Mammary epithelial cell (primary cell): ENCODE measurements at regions of chr22 and their contacts with region 1.

Region 1: GRCh38 chr22:39003165-39003638 is 10.9 kb upstream of the APOBEC3C start:
- DNase-seq: peak; percentile 87
- H3K4me3 ChIP-seq: no peak overlapping the region
- H3K27ac ChIP-seq: no peak overlapping the region
- H3K4me1 ChIP-seq: peaks cover 5% of the 10 kb centered on the region
- H3K27me3 ChIP-seq: no peaks in the 10 kb centered on the region
- CTCF ChIP-seq: peak; percentile 74 to 77

Region 2: DNA sequence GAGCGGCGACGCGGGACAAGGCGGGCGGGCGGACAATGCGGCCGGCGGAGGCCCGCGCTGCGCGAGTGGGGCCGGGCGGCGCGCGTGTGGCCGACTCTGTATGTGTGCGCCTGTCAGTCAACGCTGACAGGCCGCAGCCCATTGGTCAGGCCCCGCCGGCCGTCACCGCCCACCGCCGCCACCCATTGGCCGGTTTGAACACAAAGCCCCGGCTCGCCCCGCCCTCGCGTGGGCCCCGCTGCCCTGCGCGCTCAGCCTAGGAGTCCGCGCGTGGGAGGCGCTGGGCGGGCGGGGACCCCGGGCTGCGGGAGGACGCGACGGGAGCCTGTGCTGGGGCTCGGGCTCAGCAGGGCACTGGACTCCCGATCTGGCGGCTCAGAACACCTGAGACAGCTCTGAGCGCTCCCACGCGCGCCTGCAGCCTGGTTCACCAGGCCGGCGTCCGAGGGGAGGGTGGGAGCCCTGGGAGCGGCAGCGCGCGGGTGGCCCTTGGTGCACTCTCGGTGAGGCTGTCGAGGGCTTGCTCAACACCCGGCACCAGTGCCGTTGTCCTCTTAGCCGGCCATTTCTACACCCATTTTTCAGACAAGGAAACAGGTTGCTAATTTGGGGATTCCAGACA is 247.2 kb before region 1 on chr22 and contains the start of gene SUN2:
- CTCF ChIA-PET with region 1: no interaction called
- dilution Hi-C with region 1: no loop called
- in situ Hi-C with region 1: loop called (anchors 10 to 25 kb)
- intact Hi-C with region 1: no loop called
- DNase-seq: peak; percentile 74
- H3K4me3 ChIP-seq: peak within 1 kb of the TSS; percentile 45 to 70 (median 55)
- H3K27ac ChIP-seq: peak within 1 kb of the TSS; percentile 37
- H3K4me1 ChIP-seq: peaks cover 35% of the 10 kb centered on the region
- H3K27me3 ChIP-seq: no peaks in the 10 kb centered on the region
- CTCF ChIP-seq: no peak
- total RNA-seq, gene SUN2: 70.3 to 106 TPM

Region 3: GRCh38 chr22:38872172-38872830 is 130.9 kb before region 1 on chr22 and contains the start of gene CBX6:
- CTCF ChIA-PET with region 1: interaction called, 8 read pairs
- dilution Hi-C with region 1: no loop called
- in situ Hi-C with region 1: loop called (anchors 5 to 10 kb)
- intact Hi-C with region 1: loop called (anchors 1 kb)
- DNase-seq: peak; percentile 81
- H3K4me3 ChIP-seq: peak within 1 kb of the TSS; percentile 68 to 83 (median 76)
- H3K27ac ChIP-seq: peak within 1 kb of the TSS; percentile 36
- H3K4me1 ChIP-seq: peaks cover 27% of the 10 kb centered on the region
- H3K27me3 ChIP-seq: no peaks in the 10 kb centered on the region
- CTCF ChIP-seq: no peak
- total RNA-seq, gene CBX6: 32.3 to 55.7 TPM

Region 4: DNA sequence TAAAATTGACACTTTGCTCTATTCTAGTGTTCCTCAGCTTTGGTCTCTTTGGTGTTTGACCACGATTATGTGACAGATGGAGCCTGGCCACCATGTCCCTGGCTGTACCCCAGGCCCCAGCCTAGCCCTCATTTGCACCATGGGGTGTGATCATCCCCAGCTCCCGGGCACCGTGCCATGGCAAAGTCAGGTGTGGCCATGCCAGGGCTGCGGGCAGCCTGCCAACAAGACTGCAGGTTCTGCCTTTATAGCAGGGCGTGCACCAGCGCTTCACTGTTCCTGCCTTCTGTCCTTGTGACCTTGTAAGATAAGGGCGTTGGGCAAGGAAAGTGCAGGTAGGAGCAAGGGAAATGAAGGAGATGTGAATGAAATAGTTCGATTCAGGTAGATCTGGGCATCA is 68.2 kb before region 1 on chr22:
- CTCF ChIA-PET with region 1: no interaction called
- dilution Hi-C with region 1: loop called (anchors 5 kb)
- in situ Hi-C with region 1: no loop called
- intact Hi-C with region 1: loop called (anchors 5 kb)
- DNase-seq: peak; percentile 54
- H3K4me3 ChIP-seq: no peak overlapping the region
- H3K27ac ChIP-seq: no peak overlapping the region
- H3K4me1 ChIP-seq: peaks cover 6% of the 10 kb centered on the region
- H3K27me3 ChIP-seq: no peaks in the 10 kb centered on the region
- CTCF ChIP-seq: no peak

Region 5: DNA sequence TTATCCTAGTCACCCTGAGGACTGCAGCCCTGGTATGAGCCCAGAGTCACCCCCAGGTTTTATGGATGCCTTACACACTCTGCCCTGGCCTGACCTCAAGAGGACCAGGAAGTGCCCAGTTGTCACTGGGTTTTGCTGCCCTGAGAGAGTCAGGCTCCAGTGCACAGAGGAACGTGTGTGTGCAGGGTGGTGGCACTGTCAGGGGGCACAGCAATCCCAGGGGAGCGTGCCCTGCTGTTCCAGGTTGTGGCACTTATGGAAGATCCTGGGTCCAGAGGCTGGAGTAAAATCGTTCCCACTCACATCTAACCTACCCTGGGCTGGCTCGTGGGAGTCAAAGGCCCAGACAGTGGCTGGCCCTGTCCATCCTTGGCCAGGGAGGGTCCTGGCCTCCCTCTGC is 38.2 kb before region 1 on chr22:
- CTCF ChIA-PET with region 1: no interaction called
- dilution Hi-C with region 1: no loop called
- in situ Hi-C with region 1: no loop called
- intact Hi-C with region 1: no loop called
- DNase-seq: no peak
- H3K4me3 ChIP-seq: no peak overlapping the region
- H3K27ac ChIP-seq: no peak overlapping the region
- H3K4me1 ChIP-seq: no peaks in the 10 kb centered on the region
- H3K27me3 ChIP-seq: no peaks in the 10 kb centered on the region
- CTCF ChIP-seq: no peak

Region 6: GRCh38 chr22:38981992-38982927 is 20.9 kb before region 1 on chr22 and contains the start of gene APOBEC3B:
- CTCF ChIA-PET with region 1: interaction called, 5 read pairs
- dilution Hi-C with region 1: no loop called
- in situ Hi-C with region 1: no loop called
- intact Hi-C with region 1: loop called (anchors 2 kb)
- DNase-seq: peak; percentile 93
- H3K4me3 ChIP-seq: peak within 1 kb of the TSS; percentile 11 to 41 (median 32)
- H3K27ac ChIP-seq: peak within 1 kb of the TSS; percentile 82
- H3K4me1 ChIP-seq: peaks cover 39% of the 10 kb centered on the region
- H3K27me3 ChIP-seq: no peaks in the 10 kb centered on the region
- CTCF ChIP-seq: no peak
- total RNA-seq, gene APOBEC3B: 0.83 to 21.2 TPM

Region 7: DNA sequence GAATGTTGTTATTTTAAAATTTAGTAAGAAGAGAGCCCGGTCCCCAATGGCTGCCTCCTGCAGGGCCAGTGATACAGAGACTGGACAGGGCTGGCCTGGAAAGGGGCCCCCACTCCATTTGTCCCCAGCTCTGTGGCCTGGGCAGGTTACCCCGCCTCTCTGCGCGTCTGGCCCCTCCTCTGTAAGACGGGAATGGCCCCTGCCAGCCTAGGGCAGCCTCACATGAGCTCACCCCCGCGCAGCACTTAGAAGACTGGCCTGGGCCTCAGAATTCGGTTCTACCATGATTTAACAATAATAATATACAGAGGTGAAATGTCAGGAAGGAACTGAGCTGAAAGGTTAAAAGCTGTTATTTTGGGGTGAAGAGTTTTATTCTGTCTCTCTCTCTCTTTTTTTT is 75.1 kb after region 1 on chr22:
- CTCF ChIA-PET with region 1: no interaction called
- dilution Hi-C with region 1: no loop called
- in situ Hi-C with region 1: no loop called
- intact Hi-C with region 1: no loop called
- DNase-seq: no peak
- H3K4me3 ChIP-seq: peak overlapping the region in 1 of 3 experiments; percentile 70
- H3K27ac ChIP-seq: no peak overlapping the region
- H3K4me1 ChIP-seq: peaks cover 10% of the 10 kb centered on the region
- H3K27me3 ChIP-seq: no peaks in the 10 kb centered on the region
- CTCF ChIP-seq: no peak

Region 8: DNA sequence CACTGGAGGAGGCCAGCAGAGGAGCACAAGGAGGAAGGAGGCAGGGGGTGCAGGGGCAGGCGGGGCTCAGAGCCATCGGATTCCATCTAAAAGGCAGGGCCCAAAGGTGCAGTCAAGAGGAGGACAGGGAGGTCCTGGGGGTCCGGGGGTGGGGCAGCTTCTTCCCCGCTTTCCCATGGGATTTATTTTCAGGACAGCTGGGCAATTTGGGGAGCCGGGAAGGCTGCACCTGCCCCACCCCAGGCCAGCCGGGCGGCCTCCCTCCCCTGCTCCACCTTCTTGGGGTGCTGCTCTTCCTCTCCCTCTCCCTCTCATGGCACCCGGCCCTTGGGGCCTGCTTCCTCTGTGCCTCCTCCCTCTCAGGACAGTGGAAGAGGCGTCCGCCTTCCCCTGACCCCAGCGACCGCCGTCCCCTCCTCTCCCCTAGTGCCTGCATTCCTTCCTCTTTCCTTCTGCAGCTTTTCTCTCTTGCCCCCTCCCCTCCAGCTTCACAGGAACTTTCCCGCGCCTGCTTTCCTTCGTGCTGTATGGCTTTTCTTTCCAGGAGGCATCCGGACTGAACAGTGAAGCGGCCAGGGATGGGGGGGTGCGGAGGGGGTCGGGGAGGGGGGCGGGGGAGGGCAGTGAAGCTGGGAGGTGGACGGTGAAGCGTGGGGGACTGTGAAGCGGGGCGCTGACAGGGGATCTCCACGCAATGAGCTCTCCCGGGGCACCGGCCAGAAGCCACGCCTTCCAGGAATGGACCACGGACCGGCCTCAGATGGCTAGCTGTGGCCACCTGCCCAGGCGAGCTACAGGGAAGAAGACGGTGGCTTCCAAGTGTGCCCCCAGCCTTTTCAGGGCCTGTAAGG is 120.8 kb after region 1 on chr22:
- CTCF ChIA-PET with region 1: interaction called, 5 read pairs
- dilution Hi-C with region 1: loop called (anchors 5 kb)
- in situ Hi-C with region 1: loop called in 1 of 2 experiments (anchors 5 kb)
- intact Hi-C with region 1: loop called (anchors 1 kb)
- DNase-seq: no peak
- H3K4me3 ChIP-seq: no peak overlapping the region
- H3K27ac ChIP-seq: no peak overlapping the region
- H3K4me1 ChIP-seq: no peaks in the 10 kb centered on the region
- H3K27me3 ChIP-seq: no peaks in the 10 kb centered on the region
- CTCF ChIP-seq: no peak

Region 9: GRCh38 chr22:39319270-39320022 is 316.2 kb after region 1 on chr22 and contains the start of gene RPL3:
- CTCF ChIA-PET with region 1: no interaction called
- dilution Hi-C with region 1: no loop called
- in situ Hi-C with region 1: loop called in 1 of 2 experiments (anchors 25 kb)
- intact Hi-C with region 1: no loop called
- DNase-seq: peak; percentile 96
- H3K4me3 ChIP-seq: peak within 1 kb of the TSS; percentile 74 to 97 (median 87)
- H3K27ac ChIP-seq: peak within 1 kb of the TSS; percentile 92
- H3K4me1 ChIP-seq: peaks cover 20% of the 10 kb centered on the region
- H3K27me3 ChIP-seq: no peaks in the 10 kb centered on the region
- CTCF ChIP-seq: no peak
- total RNA-seq, gene RPL3: 1,970 to 2,165 TPM

Region 10: GRCh38 chr22:39405346-39406085 is 402.3 kb after region 1 on chr22:
- CTCF ChIA-PET with region 1: no interaction called
- dilution Hi-C with region 1: no loop called
- in situ Hi-C with region 1: no loop called
- intact Hi-C with region 1: no loop called
- DNase-seq: no peak
- H3K4me3 ChIP-seq: no peak overlapping the region
- H3K27ac ChIP-seq: no peak overlapping the region
- H3K4me1 ChIP-seq: peaks cover 5% of the 10 kb centered on the region
- H3K27me3 ChIP-seq: no peaks in the 10 kb centered on the region
- CTCF ChIP-seq: no peak

Region 11: DNA sequence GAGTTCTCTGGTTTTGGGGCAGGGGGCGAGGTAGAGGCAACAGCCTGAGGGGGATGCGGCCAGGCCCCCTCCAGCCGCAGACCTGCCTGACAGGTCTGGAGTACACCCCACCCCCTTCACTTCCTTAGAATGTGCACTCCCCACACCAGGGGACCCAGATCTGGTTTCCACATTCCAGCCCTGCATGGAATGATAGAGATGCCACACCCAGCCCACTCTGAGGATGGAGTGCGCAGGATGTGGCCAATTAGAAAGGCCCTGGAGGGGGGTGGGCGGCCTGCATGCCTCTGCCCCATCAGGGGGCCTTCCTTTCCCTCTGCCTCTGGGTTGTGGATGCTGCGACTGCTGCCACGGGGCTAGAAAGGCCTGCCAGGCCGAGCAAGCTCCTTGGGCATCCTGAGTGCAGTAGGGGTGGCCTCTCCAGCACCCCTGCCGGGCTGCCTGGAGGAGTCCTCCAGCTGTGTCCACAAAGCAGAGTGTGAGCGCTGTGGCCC is 425.4 kb after region 1 on chr22:
- CTCF ChIA-PET with region 1: no interaction called
- dilution Hi-C with region 1: no loop called
- in situ Hi-C with region 1: no loop called
- intact Hi-C with region 1: no loop called
- DNase-seq: no peak
- H3K4me3 ChIP-seq: no peak overlapping the region
- H3K27ac ChIP-seq: no peak overlapping the region
- H3K4me1 ChIP-seq: peaks cover 11% of the 10 kb centered on the region
- H3K27me3 ChIP-seq: no peaks in the 10 kb centered on the region
- CTCF ChIP-seq: no peak